ENCODE measurements at regions of chr17 and their contacts with region 1.

Region 1: GRCh38 chr17:39153599-39154051 is 2.2 kb upstream of the PLXDC1 start:
- DNase-seq: no peak
- H3K4me3 ChIP-seq: peak overlapping the region; percentile 96
- CTCF ChIP-seq: no peak

Region 2: DNA sequence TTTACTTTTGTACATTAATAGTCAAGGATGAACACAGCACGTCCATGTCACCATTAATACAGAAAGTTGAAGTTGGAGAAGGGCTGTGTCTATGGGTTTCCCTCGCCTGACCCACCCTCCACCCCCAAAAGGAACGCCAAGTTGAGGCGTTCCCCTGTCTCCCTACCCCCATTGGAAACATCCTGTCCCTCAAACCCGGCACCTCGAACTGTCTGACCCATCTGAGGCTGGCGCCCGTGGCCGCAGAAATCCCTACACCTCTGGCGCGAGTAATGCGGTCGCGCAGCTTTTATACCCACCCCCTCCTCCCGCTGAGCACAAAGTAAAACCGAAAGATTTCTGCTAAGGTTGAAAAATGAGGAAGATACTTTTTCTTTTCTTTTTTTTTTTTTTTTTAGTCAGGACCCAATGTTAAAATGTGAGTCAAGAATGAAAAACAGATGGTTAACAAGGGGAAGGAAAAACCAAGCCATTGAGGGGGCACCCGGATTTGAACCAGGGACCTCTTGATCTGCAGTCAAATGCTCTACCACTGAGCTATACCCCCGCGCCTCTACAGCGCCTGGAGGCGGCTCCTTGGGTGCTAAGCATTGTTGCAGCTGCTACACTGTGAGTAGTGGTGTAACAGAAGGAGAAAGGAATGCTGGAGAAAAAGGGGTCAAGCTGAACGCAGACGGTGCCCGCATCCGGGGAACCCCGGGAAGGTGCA is 284.7 kb before region 1 on chr17:
- CTCF ChIA-PET with region 1: interaction called, 8 read pairs
- POLR2A ChIA-PET with region 1: interaction called, 12 read pairs
- DNase-seq: no peak
- H3K4me3 ChIP-seq: peak overlapping the region; percentile 99
- CTCF ChIP-seq: peak; percentile 35

Region 3: GRCh38 chr17:39028690-39029089 is 124.9 kb before region 1 on chr17:
- CTCF ChIA-PET with region 1: interaction called, 10 read pairs
- POLR2A ChIA-PET with region 1: no interaction called
- DNase-seq: no peak
- H3K4me3 ChIP-seq: no peak overlapping the region
- CTCF ChIP-seq: no peak

Region 4: GRCh38 chr17:39139137-39139516 is 14.5 kb before region 1 on chr17:
- CTCF ChIA-PET with region 1: interaction called, 24 read pairs
- POLR2A ChIA-PET with region 1: no interaction called
- DNase-seq: peak; percentile 67
- H3K4me3 ChIP-seq: no peak overlapping the region
- CTCF ChIP-seq: no peak

Region 5: GRCh38 chr17:39174907-39175694 is 21.5 kb after region 1 on chr17:
- CTCF ChIA-PET with region 1: interaction called, 208 read pairs
- POLR2A ChIA-PET with region 1: no interaction called
- DNase-seq: no peak
- H3K4me3 ChIP-seq: no peak overlapping the region
- CTCF ChIP-seq: peak; percentile 87

Region 6: GRCh38 chr17:39244600-39245570 is 91.3 kb after region 1 on chr17:
- CTCF ChIA-PET with region 1: interaction called, 28 read pairs
- POLR2A ChIA-PET with region 1: no interaction called
- DNase-seq: no peak
- H3K4me3 ChIP-seq: no peak overlapping the region
- CTCF ChIP-seq: peak; percentile 90

Measured in AG04449 (cell line).